ENCODE measurements at regions of chr12 and their contacts with region 1.

Region 1: GRCh38 chr12:56593909-56594621 is 36.1 kb downstream of the BAZ2A start:
- DNase-seq: peak; percentile 64
- H3K4me3 Mint-ChIP-seq: no peak overlapping the region
- H3K27ac Mint-ChIP-seq: no peak overlapping the region
- H3K4me1 Mint-ChIP-seq: peaks cover 2% of the 10 kb centered on the region
- H3K27me3 Mint-ChIP-seq: no peaks in the 10 kb centered on the region

Region 2: GRCh38 chr12:56521590-56522371 is 72.3 kb before region 1 on chr12 and contains the start of gene RBMS2:
- CTCF ChIA-PET with region 1: interaction called, 11 read pairs
- POLR2A ChIA-PET with region 1: no interaction called
- DNase-seq: peak; percentile 45
- H3K4me3 Mint-ChIP-seq: peak within 1 kb of the TSS; percentile 56
- H3K27ac Mint-ChIP-seq: peak within 1 kb of the TSS; percentile 14
- H3K4me1 Mint-ChIP-seq: peaks cover 25% of the 10 kb centered on the region
- H3K27me3 Mint-ChIP-seq: no peaks in the 10 kb centered on the region
- total RNA-seq, gene RBMS2: 3.8 to 4.3 TPM

Region 3: GRCh38 chr12:56581418-56582145 is 12.5 kb before region 1 on chr12:
- CTCF ChIA-PET with region 1: interaction called, 13 read pairs
- POLR2A ChIA-PET with region 1: no interaction called
- DNase-seq: peak; percentile 32
- H3K4me3 Mint-ChIP-seq: no peak overlapping the region
- H3K27ac Mint-ChIP-seq: peak overlapping the region; percentile 44
- H3K4me1 Mint-ChIP-seq: peaks cover 28% of the 10 kb centered on the region
- H3K27me3 Mint-ChIP-seq: no peaks in the 10 kb centered on the region

Measured in activated CD4-positive, alpha-beta memory T cell treated with anti-CD3 and anti-CD28 coated beads, Interleukin-2, amount 10 ng/mL, durations not matched to agents 7 days and 5 days (primary cell).